Left lung (tissue), 14 donors: ENCODE measurements at regions of chr20 and their contacts with region 1.

Region 1: GRCh38 chr20:40286975-40287531 is 402.0 kb downstream of the MAFB start:
- DNase-seq: peak in 3 of 4 donors; percentile 28 to 82 (median 73)
- ATAC-seq: peak; percentile 77
- H3K4me3 ChIP-seq: no peak overlapping the region
- H3K27ac ChIP-seq: no peak overlapping the region
- H3K4me1 ChIP-seq: peaks cover 0 to 5% of the 10 kb centered on the region in 2 donors
- H3K27me3 ChIP-seq: no peaks in the 10 kb centered on the region
- CTCF ChIP-seq: no peak

Region 2: DNA sequence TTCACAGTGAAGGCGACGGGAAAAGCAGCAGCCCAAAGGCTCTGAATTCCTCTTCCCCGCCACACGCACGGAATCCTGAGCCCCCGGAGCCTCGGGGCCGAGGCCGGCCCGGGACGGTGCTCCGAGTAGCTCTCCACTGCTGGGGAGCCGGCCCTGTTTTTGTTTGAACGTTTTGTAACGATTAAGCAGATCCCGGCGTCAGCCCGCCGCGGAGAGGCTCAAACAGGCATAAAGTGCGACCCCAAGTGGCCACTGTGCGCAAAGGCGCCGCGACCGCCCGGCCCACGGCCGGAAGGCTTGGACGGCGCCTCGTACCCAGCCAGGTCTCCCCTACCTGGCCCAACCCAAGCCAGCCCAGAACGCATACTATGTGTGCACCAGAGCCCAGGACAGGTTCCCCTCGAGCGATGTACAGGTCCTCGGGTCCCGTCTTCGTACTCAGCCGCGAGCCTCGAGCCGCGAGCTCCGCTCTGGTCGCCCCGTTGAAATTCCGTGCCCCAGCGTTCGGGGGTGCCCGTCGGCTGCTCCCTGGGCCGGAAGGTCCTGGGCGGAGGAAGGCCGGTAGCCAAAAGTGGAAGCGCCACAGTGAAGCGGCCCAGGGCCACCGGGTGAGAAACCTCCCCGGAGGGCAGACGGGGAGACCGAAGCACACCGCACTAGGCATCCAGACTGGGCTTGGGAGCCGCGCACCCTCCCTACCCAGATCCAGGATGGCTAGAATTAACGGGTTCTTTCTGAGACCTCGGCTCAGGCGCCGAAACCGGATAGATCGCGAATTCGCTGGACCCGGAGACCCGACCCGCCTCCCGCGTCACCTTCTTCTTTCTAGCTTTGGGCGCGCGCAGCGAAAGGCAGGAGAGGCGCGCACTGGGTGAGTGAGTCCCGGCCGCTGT is 403.1 kb after region 1 on chr20:
- intact Hi-C with region 1: loop called in 1 of 2 experiments (anchors 10 kb)
- DNase-seq: peak; percentile 90 to 98 (median 93)
- ATAC-seq: peak; percentile 74
- H3K4me3 ChIP-seq: peak overlapping the region; percentile 55 to 76
- H3K27ac ChIP-seq: peak overlapping the region; percentile 98
- H3K4me1 ChIP-seq: peaks cover 5 to 58% of the 10 kb centered on the region in 2 donors
- H3K27me3 ChIP-seq: peaks cover 37 to 99% of the 10 kb centered on the region in 2 donors
- CTCF ChIP-seq: peak; percentile 92 to 94